Activated T-helper 1 cell treated with anti-CD3 and anti-CD28 coated beads, Interleukin-12 subunit alpha, Interleukin-12 subunit beta, Interleukin-2, Interleukin-4 antibody, amounts not matched to agents 30 ng/mL and 10 ng/mL and 1 ng/mL, durations not matched to agents 14 hours and 24 hours and 36 hours (primary cell): ENCODE measurements at regions of chr11 and their contacts with region 1.

Region 1: DNA sequence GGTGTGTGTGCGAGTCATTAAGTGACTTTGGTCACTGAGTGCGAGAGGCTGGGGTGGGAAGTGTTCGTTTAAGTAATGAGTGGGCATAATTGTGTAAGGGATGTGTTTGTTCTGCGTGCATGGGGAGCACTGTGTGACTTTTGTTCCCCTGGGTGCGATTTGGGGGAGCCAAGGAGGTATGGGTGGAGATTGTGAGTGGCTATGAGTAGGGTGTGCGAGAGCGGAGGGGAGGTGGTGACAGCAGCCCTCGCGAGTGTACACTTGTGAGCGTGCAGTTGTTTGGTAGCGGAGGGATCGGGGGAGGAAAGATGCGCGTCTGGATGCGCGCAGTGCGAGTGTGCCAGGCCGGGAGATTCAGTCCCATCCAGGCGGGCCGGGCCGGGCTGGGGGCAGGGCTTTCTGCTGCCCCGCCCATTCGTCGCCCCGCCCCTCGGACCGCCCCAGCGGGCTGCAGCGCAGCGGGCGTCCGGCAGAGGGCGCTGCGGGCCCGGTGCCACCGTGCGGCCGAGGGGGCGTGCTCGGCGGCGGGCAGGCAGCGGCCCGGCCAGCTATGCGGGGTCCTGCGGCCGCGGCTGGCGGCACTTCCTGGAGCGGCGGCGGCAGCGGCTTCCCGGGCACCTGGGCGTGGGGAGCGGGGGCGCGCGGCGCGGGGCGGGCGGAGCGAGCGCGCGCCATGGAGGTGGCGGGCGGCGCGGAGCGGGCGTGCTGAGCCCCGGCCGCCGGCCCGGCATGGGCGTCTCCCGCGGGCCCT is at the start of gene DGKZ:
- DNase-seq: peak; percentile 91
- H3K4me3 Mint-ChIP-seq: peak within 1 kb of the TSS; percentile 88
- H3K27ac Mint-ChIP-seq: peak within 1 kb of the TSS; percentile 89
- H3K4me1 Mint-ChIP-seq: peaks cover 72% of the 10 kb centered on the region
- H3K27me3 Mint-ChIP-seq: peaks cover 3% of the 10 kb centered on the region
- total RNA-seq, gene DGKZ: 101 TPM in 2 replicates

Region 2: DNA sequence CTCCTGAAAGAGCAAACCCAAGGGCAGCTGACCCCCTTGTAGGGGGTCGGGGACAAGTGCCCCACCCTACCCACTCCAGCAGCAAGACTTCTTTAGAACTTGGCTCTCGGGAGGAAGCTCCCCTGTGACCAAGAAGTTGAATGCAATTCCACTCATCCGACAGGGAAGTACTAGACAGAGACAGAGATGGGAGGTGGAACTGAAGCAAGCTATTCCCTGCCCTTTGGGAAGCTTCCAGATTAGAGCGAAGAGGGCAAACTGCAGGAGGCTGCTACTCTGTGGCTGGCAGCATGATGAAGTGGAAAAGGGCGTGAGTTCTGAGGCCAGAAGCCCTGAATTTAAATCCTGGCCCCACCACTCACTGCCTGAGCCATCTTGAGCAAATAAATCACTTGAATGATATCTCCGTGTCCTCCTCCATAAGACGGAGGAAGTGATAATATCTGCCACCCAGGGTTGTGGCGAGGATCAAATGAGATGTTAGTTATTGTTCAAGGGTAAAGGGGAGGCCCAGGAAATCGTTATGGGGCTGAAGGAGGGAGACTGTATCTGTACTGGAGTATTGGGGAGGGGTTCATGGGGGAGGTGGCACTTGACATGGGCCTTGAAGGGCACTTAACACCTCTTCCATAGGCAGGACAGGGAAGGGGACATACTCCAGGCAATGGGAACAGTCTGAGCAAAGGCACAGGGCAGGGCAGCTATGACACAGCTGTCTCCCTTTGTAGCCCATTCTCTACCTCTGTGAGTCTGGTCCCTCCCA is 16.0 kb before region 1 on chr11:
- intact Hi-C with region 1: loop called (anchors 1 kb)
- DNase-seq: no peak
- H3K4me3 Mint-ChIP-seq: peak overlapping the region; percentile 68
- H3K27ac Mint-ChIP-seq: no peak overlapping the region
- H3K4me1 Mint-ChIP-seq: peaks cover 19% of the 10 kb centered on the region
- H3K27me3 Mint-ChIP-seq: peaks cover 67% of the 10 kb centered on the region

Region 3: DNA sequence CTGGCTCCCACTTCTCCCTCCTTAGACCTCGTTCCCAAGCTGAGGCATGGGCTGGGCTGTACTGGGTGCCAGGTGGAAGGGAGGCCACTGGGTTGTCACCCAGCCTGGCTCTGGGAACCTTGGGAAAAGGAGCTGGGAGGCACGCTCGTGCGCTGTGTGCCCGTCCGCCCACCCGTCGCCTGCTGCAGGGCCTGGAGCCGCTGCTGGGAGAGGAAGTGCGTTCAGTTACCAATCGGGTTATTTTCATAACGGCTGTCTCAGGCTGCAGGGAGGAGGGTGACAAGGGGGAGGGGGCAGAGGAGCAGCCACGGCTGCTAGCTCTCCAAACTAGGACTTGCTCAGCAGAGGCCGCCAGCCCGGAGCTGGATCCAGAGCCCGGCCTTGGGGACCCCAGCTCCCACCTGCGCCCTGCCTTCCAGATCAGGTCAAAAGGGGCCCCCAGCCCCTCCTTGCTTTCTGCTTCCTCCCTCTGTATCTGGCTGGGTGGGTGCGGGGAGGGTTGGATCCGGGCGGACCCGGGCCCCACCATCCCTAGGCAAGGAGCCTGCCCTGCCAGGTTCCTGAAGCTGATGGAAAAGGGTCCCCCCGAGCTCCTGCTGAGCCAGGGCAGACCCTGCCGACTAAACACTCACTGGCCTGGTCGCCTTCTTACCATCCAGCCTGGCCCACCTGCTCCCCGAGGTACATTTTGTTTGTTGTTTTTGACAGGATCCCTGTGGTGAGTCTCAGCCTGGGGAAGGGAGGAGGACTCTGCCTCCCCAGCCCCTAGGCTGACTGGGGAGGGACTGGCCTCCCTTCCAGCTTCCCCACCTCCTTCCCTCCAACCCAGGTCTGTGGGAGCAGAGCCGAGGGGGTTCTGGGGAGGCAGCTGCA is 14.5 kb after region 1 on chr11:
- intact Hi-C with region 1: loop called (anchors 1 kb)
- DNase-seq: peak; percentile 52
- H3K4me3 Mint-ChIP-seq: peak overlapping the region; percentile 78
- H3K27ac Mint-ChIP-seq: peak overlapping the region; percentile 87
- H3K4me1 Mint-ChIP-seq: peaks cover 35% of the 10 kb centered on the region
- H3K27me3 Mint-ChIP-seq: no peaks in the 10 kb centered on the region

Region 4: DNA sequence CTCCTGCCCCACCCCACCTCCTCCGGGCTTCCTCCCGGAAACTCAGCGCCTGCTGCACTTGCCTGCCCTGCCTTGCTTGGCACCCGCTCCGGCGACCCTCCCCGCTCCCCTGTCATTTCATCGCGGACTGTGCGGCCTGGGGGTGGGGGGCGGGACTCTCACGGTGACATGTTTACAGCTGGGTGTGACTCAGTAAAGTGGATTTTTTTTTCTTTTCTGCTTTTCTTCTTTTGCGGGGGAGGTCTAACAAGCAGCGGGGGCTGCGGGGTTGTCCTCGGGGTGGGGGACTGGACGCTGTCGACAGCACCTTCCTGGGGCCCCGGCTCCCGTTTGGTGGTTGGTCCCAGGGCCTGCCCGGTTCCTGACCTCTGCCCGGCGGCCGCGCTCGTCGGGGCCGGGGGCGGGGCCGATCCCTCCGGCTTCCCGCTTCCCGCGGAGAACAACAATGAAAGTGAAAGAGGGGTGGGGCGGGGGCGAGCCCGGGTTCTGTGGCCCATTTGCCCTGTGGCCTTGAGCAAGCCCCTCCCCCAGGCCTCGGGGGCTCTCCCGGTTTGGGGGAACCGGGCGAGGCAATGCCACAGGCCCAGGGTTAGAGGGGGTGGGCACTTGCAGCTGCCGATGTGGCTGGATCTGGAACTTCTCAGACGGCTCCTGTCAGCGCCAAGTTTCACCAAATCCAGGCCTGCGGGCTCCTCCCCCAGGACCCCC is 33.4 kb after region 1 on chr11:
- intact Hi-C with region 1: loop called (anchors 1 kb)
- DNase-seq: peak; percentile 54
- H3K4me3 Mint-ChIP-seq: peak overlapping the region; percentile 78
- H3K27ac Mint-ChIP-seq: peak overlapping the region; percentile 75
- H3K4me1 Mint-ChIP-seq: no peaks in the 10 kb centered on the region
- H3K27me3 Mint-ChIP-seq: peaks cover 2% of the 10 kb centered on the region

Region 5: GRCh38 chr11:46649180-46649738 is 302.2 kb after region 1 on chr11:
- intact Hi-C with region 1: no loop called
- DNase-seq: no peak
- H3K4me3 Mint-ChIP-seq: no peak overlapping the region
- H3K27ac Mint-ChIP-seq: no peak overlapping the region
- H3K4me1 Mint-ChIP-seq: no peaks in the 10 kb centered on the region
- H3K27me3 Mint-ChIP-seq: no peaks in the 10 kb centered on the region